HepG2 (cell line): ENCODE measurements at regions of chr5 and their contacts with region 1.

Region 1: DNA sequence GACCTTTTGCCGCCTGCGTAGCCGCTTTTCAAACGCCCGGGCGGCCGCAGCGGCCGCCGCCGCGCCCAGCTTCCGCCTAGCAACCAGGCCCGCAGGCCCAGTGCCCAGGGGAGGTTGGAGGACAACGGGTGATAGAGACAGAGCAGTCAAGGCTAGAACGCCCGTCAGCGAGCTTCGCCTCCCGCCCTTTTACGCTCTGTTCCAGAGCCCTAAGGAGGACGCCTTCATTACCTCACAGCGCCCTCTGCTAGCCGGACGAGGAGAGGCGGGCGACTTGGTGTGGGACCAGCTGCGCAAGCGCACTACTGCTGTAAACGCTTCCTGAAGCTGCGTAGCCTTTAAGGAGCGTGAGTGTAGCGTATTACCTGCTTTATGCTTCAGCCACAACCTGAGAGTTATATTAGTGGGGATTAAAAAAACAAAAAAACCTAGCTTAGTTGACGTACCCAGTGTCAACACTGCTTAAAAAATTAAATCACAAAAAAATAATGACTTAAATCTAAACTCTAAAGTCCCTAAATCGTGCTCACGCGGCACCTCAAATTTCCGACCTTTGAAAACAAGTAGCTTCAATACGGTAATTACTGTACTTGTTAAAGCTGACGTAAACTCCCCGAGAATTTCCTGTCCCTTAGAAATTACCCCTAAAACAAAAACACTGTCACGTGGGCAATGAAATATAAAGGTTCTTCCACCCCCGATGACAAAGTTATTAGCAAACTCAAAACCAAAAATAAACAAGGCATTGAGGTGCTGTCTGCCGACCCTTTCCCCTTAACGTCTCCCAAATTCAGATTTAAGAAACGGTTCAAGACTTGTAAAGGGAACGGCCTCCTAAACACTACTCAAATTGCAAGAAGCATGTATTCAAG is at the start of gene CEP120:
- DNase-seq: peak; percentile 98
- ATAC-seq: peak; percentile 100
- H3K4me3 ChIP-seq: peak within 1 kb of the TSS; percentile 66 to 85 (median 82)
- H3K27ac ChIP-seq: peak within 1 kb of the TSS; percentile 79
- H3K4me1 ChIP-seq: peaks cover 22% of the 10 kb centered on the region
- H3K27me3 ChIP-seq: no peaks in the 10 kb centered on the region
- CTCF ChIP-seq: peak; percentile 98
- EP300 ChIP-seq: peak in 1 of 2 experiments; percentile 42; a peak in 1 of 4 replicates
- POLR2A ChIP-seq: peak; percentile 76 to 93
- RAD21 ChIP-seq: peak; percentile 48; the same call in 1 of the 2 replicates
- total RNA-seq, gene CEP120: 14.7 and 21.7 TPM in 2 replicates

Region 2: DNA sequence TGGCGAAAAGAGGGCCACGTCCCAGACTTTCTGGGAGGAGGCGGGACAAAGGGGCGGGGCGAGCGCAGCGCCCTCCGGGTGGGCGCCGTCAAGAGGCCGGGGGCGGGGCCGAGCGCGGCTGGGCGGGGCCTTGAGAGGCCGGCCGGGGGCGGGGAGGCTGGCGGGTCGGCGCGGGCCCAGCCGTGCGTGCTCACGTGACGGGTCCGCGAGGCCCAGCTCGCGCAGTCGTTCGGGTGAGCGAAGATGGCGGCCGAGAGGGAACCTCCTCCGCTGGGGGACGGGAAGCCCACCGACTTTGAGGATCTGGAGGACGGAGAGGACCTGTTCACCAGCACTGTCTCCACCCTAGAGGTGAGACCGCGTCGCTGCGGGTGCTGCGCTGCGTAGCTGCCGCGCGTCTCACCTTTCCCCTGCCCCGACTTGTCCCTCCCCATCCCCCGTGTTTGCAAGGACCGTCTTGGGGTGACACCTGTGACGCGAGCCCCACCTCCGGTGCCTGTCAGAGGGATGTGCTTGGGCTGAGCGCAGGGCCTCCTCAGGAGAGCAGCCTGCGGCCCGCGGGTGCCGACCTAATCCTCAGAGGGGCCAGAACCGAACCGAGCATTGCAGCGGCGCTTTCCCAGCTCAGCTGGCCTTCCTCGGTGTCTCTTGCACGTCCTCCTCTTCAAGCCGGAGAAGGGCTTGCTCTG is 648.5 kb before region 1 on chr5 and contains the start of gene SNX2:
- CTCF ChIA-PET with region 1: no interaction called
- POLR2A ChIA-PET with region 1: interaction called, 3 read pairs
- in situ Hi-C with region 1: no loop called
- intact Hi-C with region 1: loop called (anchors 2 kb)
- DNase-seq: peak; percentile 76
- ATAC-seq: peak; percentile 92
- H3K4me3 ChIP-seq: peak within 1 kb of the TSS; percentile 95 to 98 (median 96)
- H3K27ac ChIP-seq: peak within 1 kb of the TSS; percentile 74
- H3K4me1 ChIP-seq: peaks cover 54% of the 10 kb centered on the region
- H3K27me3 ChIP-seq: no peaks in the 10 kb centered on the region; a peak in 1 of 5 replicates
- CTCF ChIP-seq: peak; percentile 26
- EP300 ChIP-seq: no peak
- POLR2A ChIP-seq: peak; percentile 92 to 95
- RAD21 ChIP-seq: peak; percentile 26; the same call in 1 of the 2 replicates
- total RNA-seq, gene SNX2: 78.8 and 125 TPM in 2 replicates

Region 3: DNA sequence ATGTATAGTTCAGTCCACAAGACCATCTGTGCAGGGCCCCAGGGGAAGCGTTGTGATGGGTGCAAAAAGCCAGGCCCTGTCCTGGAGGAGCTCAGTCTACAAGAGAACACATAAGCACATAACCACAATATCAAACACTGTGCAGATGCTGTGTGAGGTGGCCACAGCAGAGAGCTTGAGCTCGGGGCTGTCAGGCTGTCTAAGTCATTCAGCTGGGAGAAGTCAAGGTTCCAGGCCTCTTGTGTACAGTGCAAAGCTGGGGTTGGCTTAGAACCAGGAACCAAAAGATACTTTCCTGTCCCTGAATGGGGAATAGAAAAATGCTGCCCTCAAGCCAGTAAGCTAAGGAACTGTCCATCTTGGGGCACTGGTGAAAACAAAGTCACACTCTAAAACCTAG is 259.5 kb before region 1 on chr5:
- CTCF ChIA-PET with region 1: no interaction called
- POLR2A ChIA-PET with region 1: no interaction called
- in situ Hi-C with region 1: no loop called
- intact Hi-C with region 1: no loop called
- DNase-seq: no peak
- ATAC-seq: no peak
- H3K4me3 ChIP-seq: no peak overlapping the region
- H3K27ac ChIP-seq: no peak overlapping the region
- H3K4me1 ChIP-seq: no peaks in the 10 kb centered on the region
- H3K27me3 ChIP-seq: no peaks in the 10 kb centered on the region
- CTCF ChIP-seq: no peak
- EP300 ChIP-seq: no peak
- POLR2A ChIP-seq: no peak
- RAD21 ChIP-seq: no peak

Region 4: DNA sequence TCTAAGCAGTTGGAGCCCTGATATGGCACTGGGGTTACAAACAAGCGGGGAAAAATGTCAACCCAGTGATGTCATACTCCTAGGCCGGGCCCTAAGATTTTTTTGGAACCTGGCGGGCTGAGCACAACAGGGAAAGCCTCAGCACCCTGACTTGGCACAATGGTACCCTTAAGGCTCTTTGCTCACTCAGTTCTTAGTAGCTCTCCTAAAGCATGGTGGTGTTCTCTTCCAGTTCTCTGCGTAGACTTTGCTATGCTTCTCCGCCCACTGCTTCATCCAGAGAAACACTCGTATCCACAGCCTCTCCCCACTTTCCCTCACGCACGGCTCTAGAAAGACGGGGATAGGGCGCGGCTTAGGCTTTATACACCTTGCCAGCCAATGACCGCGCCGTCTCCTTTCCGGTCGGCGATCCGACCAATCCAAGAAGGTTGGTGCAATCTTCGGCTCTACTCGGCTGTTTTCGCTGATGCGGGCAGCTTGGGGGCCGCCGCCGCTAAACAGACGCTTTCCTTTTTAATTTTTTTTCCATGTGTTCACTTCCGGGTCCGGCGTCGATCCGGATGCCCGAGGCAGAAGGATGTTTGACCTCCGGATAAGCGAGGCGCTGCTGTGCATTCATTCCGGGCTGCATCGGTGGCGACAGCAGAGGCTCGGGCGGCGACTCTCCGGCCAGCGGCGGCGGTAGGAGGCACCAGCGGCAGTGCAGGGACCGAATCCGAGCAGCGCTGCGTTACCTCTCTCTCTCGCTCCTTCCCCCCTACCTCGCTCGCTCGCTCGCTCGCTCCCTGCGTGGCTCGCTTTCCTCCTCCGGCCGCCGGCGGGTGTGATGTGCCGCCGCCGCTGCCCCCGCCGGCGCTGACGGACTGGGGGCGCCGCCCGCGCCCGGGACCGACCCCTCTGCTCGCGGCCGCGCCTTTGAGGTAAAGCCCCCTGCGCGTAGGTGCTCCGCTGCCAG is 88.4 kb after region 1 on chr5 and contains the start of gene CSNK1G3:
- CTCF ChIA-PET with region 1: interaction called, 3 read pairs
- POLR2A ChIA-PET with region 1: interaction called, 50 read pairs
- in situ Hi-C with region 1: no loop called
- intact Hi-C with region 1: loop called (anchors 1 kb)
- DNase-seq: peak; percentile 93
- ATAC-seq: peak; percentile 97
- H3K4me3 ChIP-seq: peak within 1 kb of the TSS; percentile 89 to 96 (median 92)
- H3K27ac ChIP-seq: peak within 1 kb of the TSS; percentile 89
- H3K4me1 ChIP-seq: peaks cover 39% of the 10 kb centered on the region
- H3K27me3 ChIP-seq: no peaks in the 10 kb centered on the region; a peak in 1 of 5 replicates
- CTCF ChIP-seq: peak; percentile 27; the same call in 1 of the 2 replicates
- EP300 ChIP-seq: peak in 1 of 2 experiments; percentile 50; a peak in 1 of 4 replicates
- POLR2A ChIP-seq: peak; percentile 98 to 99
- RAD21 ChIP-seq: peak; percentile 64
- total RNA-seq, gene CSNK1G3: 31.5 and 35.4 TPM in 2 replicates

Region 5: DNA sequence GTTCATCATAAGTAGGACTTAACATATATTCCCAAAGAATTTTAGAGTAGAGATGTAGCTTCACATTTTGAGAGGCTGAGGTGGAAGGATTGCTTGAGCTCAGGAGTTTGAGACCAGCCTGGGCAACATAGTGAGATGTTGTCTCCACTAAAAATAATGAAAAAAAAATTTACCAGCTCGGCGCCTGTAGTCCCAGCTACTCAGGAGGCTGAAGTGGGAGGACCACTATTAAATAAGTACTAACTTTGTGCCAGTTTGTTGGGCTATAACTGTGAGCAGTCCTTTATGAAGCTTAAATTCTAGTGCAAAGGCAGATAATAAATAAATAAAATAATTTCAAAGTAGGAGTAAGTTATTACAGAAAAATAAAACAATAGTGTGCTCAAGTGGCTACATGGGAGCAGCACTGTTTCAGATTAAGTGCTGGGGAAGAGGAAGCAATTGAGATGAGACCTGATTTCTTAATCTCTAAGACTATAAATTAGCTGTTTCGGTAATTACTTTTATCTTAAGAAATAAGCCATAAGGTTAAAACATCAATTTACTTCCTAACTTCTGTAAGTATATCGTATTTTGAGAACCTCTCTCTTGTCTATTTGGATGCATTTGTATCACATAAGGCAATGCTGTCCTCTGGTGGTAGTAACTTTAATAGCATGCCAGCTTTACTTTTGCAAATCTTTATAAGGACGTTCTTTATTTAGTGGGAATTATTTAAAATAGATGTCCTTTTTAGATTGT is 187.3 kb after region 1 on chr5:
- CTCF ChIA-PET with region 1: interaction called, 7 read pairs
- POLR2A ChIA-PET with region 1: no interaction called
- in situ Hi-C with region 1: loop called (anchors 5 kb)
- intact Hi-C with region 1: loop called (anchors 1 kb)
- DNase-seq: peak; percentile 54
- ATAC-seq: peak; percentile 61
- H3K4me3 ChIP-seq: no peak overlapping the region
- H3K27ac ChIP-seq: no peak overlapping the region
- H3K4me1 ChIP-seq: no peaks in the 10 kb centered on the region
- H3K27me3 ChIP-seq: no peaks in the 10 kb centered on the region
- CTCF ChIP-seq: peak; percentile 76
- EP300 ChIP-seq: no peak
- POLR2A ChIP-seq: no peak
- RAD21 ChIP-seq: peak; percentile 76